Ascending aorta (tissue), 2 donors: ENCODE measurements at regions of chr17 and their contacts with region 1.

Region 1: DNA sequence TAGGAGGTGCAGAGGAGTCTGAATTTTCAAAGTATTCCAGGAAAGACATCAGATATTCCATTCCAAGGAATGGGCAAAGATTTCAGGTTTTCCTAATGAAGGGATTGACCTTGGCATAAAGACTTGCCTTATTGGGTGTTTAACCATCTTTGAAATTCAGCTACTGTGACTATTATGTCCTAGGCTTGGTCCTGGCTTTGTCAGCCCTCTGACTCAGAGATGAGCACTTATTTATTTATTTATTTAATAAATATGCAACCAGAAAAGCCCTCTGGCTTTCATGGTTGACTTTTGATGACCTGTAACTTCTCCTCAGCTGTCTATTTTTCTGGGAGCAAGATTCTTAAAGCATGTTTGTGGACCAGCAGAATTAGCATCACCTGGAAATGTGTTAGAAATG is 455.1 kb downstream of the KIF2B start:
- DNase-seq: no peak
- H3K4me3 ChIP-seq: no peak overlapping the region
- H3K27ac ChIP-seq: no peak overlapping the region
- H3K4me1 ChIP-seq: no peaks in the 10 kb centered on the region
- H3K27me3 ChIP-seq: no peaks in the 10 kb centered on the region
- CTCF ChIP-seq: no peak

Region 2: GRCh38 chr17:54754560-54754959 is 476.7 kb after region 1 on chr17:
- intact Hi-C with region 1: loop called (anchors 5 kb)
- DNase-seq: no peak
- H3K4me3 ChIP-seq: no peak overlapping the region
- H3K27ac ChIP-seq: no peak overlapping the region
- H3K4me1 ChIP-seq: no peaks in the 10 kb centered on the region
- H3K27me3 ChIP-seq: no peaks in the 10 kb centered on the region
- CTCF ChIP-seq: no peak